Aorta (tissue), 5 donors: ENCODE measurements at regions of chr9 and their contacts with region 1.

Region 1: DNA sequence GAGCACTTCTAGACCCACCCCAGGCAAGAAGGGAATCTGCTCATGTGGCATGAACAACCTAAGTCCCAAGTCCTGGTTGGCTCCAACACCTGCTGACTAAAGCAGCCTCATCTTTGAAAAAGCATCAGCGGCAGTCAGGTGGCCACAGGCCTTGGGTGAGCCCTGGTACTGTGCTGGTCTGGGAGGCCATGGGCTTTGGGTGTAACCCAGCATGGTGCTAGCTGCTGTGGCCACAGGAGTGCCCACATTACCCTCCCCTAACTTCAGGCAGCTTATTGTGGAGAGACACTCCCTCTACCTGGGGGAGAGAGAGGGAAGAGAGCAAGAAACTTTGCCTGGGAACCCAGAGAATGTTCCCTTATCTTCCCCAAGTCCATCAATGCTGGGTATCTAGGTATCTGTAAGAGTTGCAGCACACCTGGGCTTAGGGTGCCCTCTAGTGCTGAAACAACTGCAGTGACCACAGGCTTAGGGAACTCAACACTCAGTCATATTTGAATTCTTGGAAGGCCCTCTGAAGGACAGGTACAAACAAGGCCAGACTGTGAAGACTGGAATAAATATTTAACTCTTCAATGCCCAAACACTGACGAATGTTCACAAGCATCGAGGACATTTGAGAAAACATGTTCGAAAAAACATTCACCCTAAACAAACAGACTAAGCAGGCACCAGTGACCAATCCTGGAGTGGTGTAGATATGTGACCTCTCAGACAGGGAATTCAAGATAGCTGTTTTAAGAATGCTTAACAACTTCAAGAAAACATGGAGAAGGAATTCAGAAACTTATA is 69.9 kb upstream of the OR2K2 start:
- DNase-seq: no peak
- ATAC-seq: no peak
- H3K4me3 ChIP-seq: no peak overlapping the region
- H3K27ac ChIP-seq: no peak overlapping the region
- H3K4me1 ChIP-seq: no peaks in the 10 kb centered on the region
- H3K27me3 ChIP-seq: no peaks in the 10 kb centered on the region

Region 2: DNA sequence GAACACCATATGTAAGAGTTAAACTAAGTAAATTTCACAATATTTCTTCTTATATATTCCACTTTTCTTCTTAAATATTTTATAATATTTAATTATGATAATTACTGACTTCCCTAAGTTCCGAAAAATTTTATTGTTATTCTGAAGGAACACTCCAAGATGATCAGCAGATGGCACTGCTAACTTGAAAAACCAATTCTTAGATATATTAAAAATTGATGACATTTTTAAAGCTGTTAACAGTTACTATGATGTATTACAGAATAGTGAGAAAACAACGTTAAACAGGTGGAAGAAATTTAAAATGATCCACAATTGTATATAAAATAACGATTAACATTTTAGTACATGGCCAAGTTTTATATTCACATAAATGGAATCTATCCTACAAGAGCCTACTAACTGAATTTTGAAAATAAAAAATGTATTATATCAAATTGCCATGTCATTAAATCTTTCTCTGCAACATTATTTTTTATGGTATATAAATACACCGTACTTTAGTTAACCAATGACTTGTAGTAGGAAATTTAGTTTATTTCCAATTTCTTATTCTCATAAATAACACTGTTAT is 761.5 kb before region 1 on chr9:
- intact Hi-C with region 1: loop called in 1 of 2 experiments (anchors 5 kb)
- DNase-seq: no peak
- ATAC-seq: no peak
- H3K4me3 ChIP-seq: no peak overlapping the region
- H3K27ac ChIP-seq: no peak overlapping the region
- H3K4me1 ChIP-seq: no peaks in the 10 kb centered on the region
- H3K27me3 ChIP-seq: no peaks in the 10 kb centered on the region

Region 3: GRCh38 chr9:111582888-111583287 is 182.9 kb after region 1 on chr9:
- intact Hi-C with region 1: no loop called
- DNase-seq: no peak
- ATAC-seq: no peak
- H3K4me3 ChIP-seq: no peak overlapping the region
- H3K27ac ChIP-seq: no peak overlapping the region
- H3K4me1 ChIP-seq: no peaks in the 10 kb centered on the region
- H3K27me3 ChIP-seq: no peaks in the 10 kb centered on the region